ENCODE measurements at regions of chr10 and their contacts with region 1.

Region 1: DNA sequence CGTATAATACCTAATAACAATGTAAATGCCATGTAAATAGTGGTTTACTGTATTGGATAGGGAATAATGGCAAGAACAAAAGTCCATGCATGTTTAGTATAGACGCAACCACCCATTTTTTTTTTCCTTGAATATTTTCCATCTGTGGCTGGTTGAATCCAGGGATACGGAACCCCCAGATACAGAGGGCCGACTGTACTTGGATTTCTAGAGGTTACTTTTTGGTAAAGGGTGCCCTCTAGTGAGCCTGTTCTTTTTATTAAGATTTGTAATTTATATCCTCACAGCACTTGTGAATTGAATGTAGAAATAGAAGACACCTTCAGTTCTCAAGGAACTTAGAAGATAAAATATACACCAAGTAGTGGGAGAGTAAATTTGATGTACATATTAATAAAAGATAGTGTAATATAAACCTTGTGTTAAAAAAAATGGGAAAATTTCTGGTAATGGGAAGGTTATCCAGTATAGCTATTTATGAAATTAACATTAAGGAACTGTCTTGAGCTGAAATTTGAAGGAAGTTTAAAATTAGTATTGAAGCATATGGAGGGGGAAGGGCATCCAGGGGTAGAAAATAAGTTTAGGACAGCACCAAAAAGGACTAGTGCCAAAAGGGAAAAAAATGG is 32.0 kb downstream of the EXOC6 start:
- DNase-seq: peak; percentile 17
- H3K4me3 ChIP-seq: no peak overlapping the region
- H3K27ac ChIP-seq: no peak overlapping the region
- H3K4me1 ChIP-seq: no peaks in the 10 kb centered on the region
- H3K27me3 ChIP-seq: no peaks in the 10 kb centered on the region
- CTCF ChIP-seq: peak; percentile 31 to 48

Region 2: DNA sequence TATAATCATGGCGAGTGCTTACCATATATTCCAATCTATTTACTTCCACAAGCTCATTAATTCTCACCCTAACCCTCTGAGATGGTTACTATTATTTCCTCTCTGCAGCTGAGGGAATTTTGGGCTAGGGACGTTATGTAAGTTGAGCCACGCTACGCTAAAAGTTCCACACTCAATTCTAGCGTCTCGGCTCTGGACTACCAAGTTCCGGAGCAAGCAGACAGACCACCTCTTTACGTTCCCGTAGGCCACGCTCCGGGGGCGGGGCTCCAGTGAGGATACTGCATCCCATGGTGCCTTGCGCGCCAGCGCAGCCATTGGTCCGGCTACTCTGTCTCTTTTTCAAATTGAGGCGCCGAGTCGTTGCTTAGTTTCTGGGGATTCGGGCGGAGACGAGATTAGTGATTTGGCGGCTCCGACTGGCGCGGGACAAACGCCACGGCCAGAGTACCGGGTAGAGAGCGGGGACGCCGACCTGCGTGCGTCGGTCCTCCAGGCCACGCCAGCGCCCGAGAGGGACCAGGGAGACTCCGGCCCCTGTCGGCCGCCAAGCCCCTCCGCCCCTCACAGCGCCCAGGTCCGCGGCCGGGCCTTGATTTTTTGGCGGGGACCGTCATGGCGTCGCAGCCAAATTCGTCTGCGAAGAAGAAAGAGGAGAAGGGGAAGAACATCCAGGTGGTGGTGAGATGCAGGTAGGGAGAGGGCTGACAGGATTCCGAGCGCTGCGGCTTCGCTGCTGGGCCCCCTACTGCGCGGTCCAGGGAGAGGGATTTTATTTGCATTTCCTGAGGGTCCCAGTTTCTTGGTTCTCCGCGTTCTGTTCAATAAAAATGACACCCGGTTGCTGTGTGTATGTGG is 287.4 kb before region 1 on chr10 and contains the start of gene KIF11:
- CTCF ChIA-PET with region 1: interaction called, 18 read pairs
- dilution Hi-C with region 1: no loop called
- in situ Hi-C with region 1: no loop called
- intact Hi-C with region 1: loop called (anchors 1 kb)
- DNase-seq: peak; percentile 95
- H3K4me3 ChIP-seq: peak within 1 kb of the TSS; percentile 62 to 94 (median 87)
- H3K27ac ChIP-seq: peak within 1 kb of the TSS; percentile 87
- H3K4me1 ChIP-seq: peaks cover 17% of the 10 kb centered on the region
- H3K27me3 ChIP-seq: no peaks in the 10 kb centered on the region
- CTCF ChIP-seq: no peak
- total RNA-seq, gene KIF11: 2.7 to 22.4 TPM

Region 3: GRCh38 chr10:92747600-92747999 is 132.7 kb before region 1 on chr10:
- CTCF ChIA-PET with region 1: no interaction called
- dilution Hi-C with region 1: no loop called
- in situ Hi-C with region 1: no loop called
- intact Hi-C with region 1: no loop called
- DNase-seq: no peak
- H3K4me3 ChIP-seq: no peak overlapping the region
- H3K27ac ChIP-seq: no peak overlapping the region
- H3K4me1 ChIP-seq: no peaks in the 10 kb centered on the region
- H3K27me3 ChIP-seq: no peaks in the 10 kb centered on the region
- CTCF ChIP-seq: no peak

Region 4: GRCh38 chr10:92848441-92849233 is 31.7 kb before region 1 on chr10 and contains the start of gene EXOC6:
- CTCF ChIA-PET with region 1: no interaction called
- dilution Hi-C with region 1: no loop called
- in situ Hi-C with region 1: no loop called
- intact Hi-C with region 1: loop called (anchors 1 kb)
- DNase-seq: peak; percentile 78
- H3K4me3 ChIP-seq: peak within 1 kb of the TSS; percentile 73 to 82 (median 80)
- H3K27ac ChIP-seq: peak within 1 kb of the TSS; percentile 1
- H3K4me1 ChIP-seq: peaks cover 18% of the 10 kb centered on the region
- H3K27me3 ChIP-seq: no peaks in the 10 kb centered on the region
- CTCF ChIP-seq: no peak
- total RNA-seq, gene EXOC6: 3.5 to 4.6 TPM

Region 5: GRCh38 chr10:93074147-93074596 is 193.8 kb after region 1 on chr10:
- CTCF ChIA-PET with region 1: no interaction called
- dilution Hi-C with region 1: no loop called
- in situ Hi-C with region 1: no loop called
- intact Hi-C with region 1: loop called (anchors 10 kb)
- DNase-seq: no peak
- H3K4me3 ChIP-seq: peak overlapping the region in 1 of 3 experiments; percentile 31
- H3K27ac ChIP-seq: no peak overlapping the region
- H3K4me1 ChIP-seq: peaks cover 33% of the 10 kb centered on the region
- H3K27me3 ChIP-seq: peaks cover 38% of the 10 kb centered on the region
- CTCF ChIP-seq: no peak

Region 6: GRCh38 chr10:93309062-93309461 is 428.7 kb after region 1 on chr10:
- CTCF ChIA-PET with region 1: no interaction called
- dilution Hi-C with region 1: no loop called
- in situ Hi-C with region 1: loop called in 1 of 2 experiments (anchors 25 kb)
- intact Hi-C with region 1: no loop called
- DNase-seq: no peak
- H3K4me3 ChIP-seq: no peak overlapping the region
- H3K27ac ChIP-seq: no peak overlapping the region
- H3K4me1 ChIP-seq: no peaks in the 10 kb centered on the region
- H3K27me3 ChIP-seq: no peaks in the 10 kb centered on the region
- CTCF ChIP-seq: no peak

Region 7: DNA sequence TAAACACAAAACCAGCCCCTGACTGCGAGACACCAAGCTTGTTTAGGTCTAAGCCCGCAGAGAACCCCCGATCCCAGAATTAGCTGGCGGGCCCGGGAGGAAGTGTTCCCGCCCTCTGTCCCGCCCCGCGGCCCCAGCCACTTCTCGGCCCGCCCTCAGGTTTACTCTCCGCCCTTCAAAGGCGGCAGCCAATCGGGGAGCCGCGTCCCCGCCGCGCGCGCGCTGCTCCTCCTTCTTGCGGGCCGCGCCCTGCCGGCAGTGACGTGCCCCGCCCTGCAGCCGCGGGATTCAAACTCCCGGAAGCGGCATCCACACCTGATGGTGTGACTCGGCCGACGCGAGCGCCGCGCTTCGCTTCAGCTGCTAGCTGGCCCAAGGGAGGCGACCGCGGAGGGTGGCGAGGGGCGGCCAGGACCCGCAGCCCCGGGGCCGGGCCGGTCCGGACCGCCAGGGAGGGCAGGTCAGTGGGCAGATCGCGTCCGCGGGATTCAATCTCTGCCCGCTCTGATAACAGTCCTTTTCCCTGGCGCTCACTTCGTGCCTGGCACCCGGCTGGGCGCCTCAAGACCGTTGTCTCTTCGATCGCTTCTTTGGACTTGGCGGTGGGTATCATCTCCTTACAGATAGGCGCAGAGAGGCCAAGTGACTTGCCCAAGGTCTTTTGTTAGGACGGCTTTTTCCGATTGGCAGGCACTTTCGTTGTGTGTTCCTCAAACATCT is 616.1 kb after region 1 on chr10 and contains the start of gene CEP55:
- CTCF ChIA-PET with region 1: no interaction called
- dilution Hi-C with region 1: no loop called
- in situ Hi-C with region 1: loop called in 1 of 2 experiments (anchors 25 kb)
- intact Hi-C with region 1: no loop called
- DNase-seq: peak; percentile 95
- H3K4me3 ChIP-seq: peak within 1 kb of the TSS; percentile 75 to 83 (median 83)
- H3K27ac ChIP-seq: peak within 1 kb of the TSS; percentile 75
- H3K4me1 ChIP-seq: peaks cover 12% of the 10 kb centered on the region
- H3K27me3 ChIP-seq: no peaks in the 10 kb centered on the region
- CTCF ChIP-seq: no peak
- total RNA-seq, gene CEP55: 1.2 to 35.4 TPM